ENCODE measurements at regions of chr6 and their contacts with region 1.

Region 1: GRCh38 chr6:19210849-19211590 is 626.1 kb upstream of the ID4 start:
- DNase-seq: peak; percentile 53
- ATAC-seq: peak; percentile 40

Region 2: GRCh38 chr6:18595774-18596530 is 615.1 kb before region 1 on chr6:
- intact Hi-C with region 1: loop called (anchors 10 kb)
- DNase-seq: no peak
- ATAC-seq: peak; percentile 77

Region 3: DNA sequence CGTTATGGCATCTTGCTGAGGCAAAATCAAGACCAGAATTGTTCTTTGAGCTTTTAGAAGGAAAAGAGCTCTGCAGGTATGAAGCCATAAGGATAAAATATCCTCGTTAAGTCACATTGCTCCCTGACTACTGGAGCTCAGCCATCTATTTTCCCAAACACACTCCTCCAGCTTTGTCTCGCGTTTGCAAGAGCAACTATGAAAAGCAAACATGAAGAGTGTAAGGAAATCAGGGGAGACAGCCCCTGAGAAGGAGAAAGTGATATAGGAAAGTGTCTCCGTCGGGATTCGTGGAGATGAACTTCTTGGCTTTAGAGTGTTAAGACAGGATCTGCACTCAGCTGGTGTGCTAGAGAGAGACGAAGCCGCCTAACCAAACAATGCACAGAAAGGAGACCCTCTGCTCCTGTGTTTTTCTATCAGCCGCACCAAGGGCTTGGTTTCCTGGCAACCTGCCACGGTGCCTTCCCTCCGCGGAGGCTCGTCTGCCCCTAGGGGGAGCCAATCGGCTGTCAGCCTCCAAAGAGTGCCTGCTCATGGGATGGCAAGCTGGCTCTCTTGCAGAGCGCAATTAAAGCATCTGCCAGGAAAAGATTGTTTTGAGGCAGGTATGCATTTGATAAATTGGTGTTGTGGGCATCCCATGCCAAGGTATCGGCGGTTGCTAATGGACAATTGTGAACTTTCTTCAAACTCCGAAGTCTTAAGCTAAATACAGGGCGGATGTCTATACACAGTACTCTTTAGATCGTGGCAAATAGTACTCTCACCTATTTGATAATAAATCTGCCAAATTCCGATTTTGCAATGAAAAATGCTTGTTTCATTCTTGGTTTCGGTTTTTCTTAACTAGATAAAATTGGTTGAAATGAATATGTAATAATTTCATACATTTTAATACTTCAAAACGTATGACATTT is 220.7 kb before region 1 on chr6:
- intact Hi-C with region 1: no loop called
- DNase-seq: peak; percentile 83
- ATAC-seq: peak; percentile 77

Region 4: DNA sequence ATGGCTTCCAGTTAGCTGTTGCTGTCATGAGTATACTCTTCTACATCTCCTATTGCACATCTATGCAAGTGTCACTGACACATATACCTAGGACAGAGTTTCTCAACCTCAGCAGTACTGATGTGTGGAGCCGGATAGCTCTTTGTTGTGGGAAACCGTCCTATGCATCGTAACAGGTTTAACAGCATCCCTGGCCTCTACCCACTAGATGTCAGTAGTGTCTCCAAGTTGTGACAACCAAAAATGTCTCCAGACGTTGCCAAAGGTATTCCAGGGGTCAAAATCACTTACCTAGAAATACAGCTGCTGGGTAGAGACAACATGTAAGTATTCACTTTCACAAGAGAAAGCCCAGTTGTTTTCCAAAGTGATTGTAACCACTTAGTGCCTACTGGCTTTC is 186.3 kb before region 1 on chr6:
- intact Hi-C with region 1: loop called (anchors 5 kb)
- DNase-seq: no peak
- ATAC-seq: peak; percentile 71